CD4-positive, alpha-beta T cell (primary cell): ENCODE measurements at regions of chr19 and their contacts with region 1.

Region 1: GRCh38 chr19:34639491-34640085 is 37.4 kb downstream of the SCGB2B2 start:
- DNase-seq: peak; percentile 8 to 89 (median 52)
- ATAC-seq: peak; percentile 48
- H3K4me3 ChIP-seq: no peak overlapping the region
- H3K4me3 Mint-ChIP-seq: no peak overlapping the region
- H3K27ac ChIP-seq: no peak overlapping the region
- H3K27ac Mint-ChIP-seq: no peak overlapping the region
- H3K4me1 ChIP-seq: no peaks in the 10 kb centered on the region
- H3K4me1 Mint-ChIP-seq: no peaks in the 10 kb centered on the region
- H3K27me3 ChIP-seq: no peaks in the 10 kb centered on the region
- H3K27me3 Mint-ChIP-seq: no peaks in the 10 kb centered on the region
- CTCF ChIP-seq: peak; percentile 81

Region 2: DNA sequence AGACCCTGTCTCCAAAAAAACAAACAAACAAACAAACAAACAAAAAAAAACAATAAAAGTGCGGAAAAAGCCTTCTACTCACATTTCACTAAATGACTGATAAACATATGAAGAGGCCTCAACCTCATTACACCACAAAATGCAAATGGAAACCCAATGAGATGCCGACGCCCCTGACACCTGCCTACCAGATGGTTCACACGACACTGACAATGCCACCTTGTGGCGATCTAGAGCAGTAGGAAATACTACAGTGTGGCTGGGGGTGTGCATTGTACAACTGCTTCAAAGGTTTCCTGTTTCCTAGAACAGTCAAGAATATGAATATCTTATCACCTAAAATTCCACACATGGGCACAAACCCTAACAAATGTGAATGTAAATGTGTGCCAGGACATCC is 23.3 kb after region 1 on chr19:
- CTCF ChIA-PET with region 1: no interaction called
- POLR2A ChIA-PET with region 1: no interaction called
- intact Hi-C with region 1: loop called in 1 of 2 experiments (anchors 1 kb)
- DNase-seq: peak in 11 of 14 experiments; percentile 7 to 78 (median 42)
- ATAC-seq: peak; percentile 100
- H3K4me3 ChIP-seq: no peak overlapping the region
- H3K4me3 Mint-ChIP-seq: no peak overlapping the region
- H3K27ac ChIP-seq: no peak overlapping the region
- H3K27ac Mint-ChIP-seq: peak overlapping the region; percentile 8
- H3K4me1 ChIP-seq: peaks cover 23% of the 10 kb centered on the region
- H3K4me1 Mint-ChIP-seq: peaks cover 31% of the 10 kb centered on the region
- H3K27me3 ChIP-seq: no peaks in the 10 kb centered on the region
- H3K27me3 Mint-ChIP-seq: peaks cover 3% of the 10 kb centered on the region
- CTCF ChIP-seq: peak; percentile 63

Region 3: GRCh38 chr19:35090506-35091237 is 451.1 kb after region 1 on chr19:
- CTCF ChIA-PET with region 1: no interaction called
- POLR2A ChIA-PET with region 1: no interaction called
- intact Hi-C with region 1: loop called in 1 of 2 experiments (anchors 2 kb)
- DNase-seq: peak in 11 of 14 experiments; percentile 5 to 70 (median 23)
- ATAC-seq: peak; percentile 80
- H3K4me3 ChIP-seq: no peak overlapping the region
- H3K4me3 Mint-ChIP-seq: no peak overlapping the region
- H3K27ac ChIP-seq: no peak overlapping the region
- H3K27ac Mint-ChIP-seq: no peak overlapping the region
- H3K4me1 ChIP-seq: peaks cover 11% of the 10 kb centered on the region
- H3K4me1 Mint-ChIP-seq: peaks cover 5% of the 10 kb centered on the region
- H3K27me3 ChIP-seq: peaks cover 10 to 11% of the 10 kb centered on the region in 2 experiments
- H3K27me3 Mint-ChIP-seq: peaks cover 12% of the 10 kb centered on the region
- CTCF ChIP-seq: peak; percentile 78